ENCODE measurements at regions of chr5 and their contacts with region 1.

Region 1: DNA sequence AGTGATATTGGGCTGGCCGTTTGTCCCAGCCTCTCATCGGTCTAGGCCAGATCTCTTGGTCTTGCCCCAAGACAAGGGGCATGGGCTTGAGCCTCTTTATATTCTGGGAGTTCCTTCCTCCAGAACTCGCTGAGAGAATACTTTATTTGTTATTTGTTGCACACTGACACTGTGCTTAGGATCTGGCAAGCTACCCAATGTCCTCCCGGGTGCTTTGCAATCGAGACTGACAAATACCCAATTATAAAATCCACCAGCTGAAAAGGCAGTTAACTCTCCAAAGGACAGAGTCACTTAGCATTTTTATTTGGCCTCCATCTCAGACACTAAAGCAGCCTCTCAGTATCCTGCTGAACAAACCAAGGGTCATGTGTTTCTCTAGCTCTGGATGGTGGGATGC is 500.2 kb upstream of the DAP start:
- DNase-seq: no peak
- H3K4me3 ChIP-seq: no peak overlapping the region
- H3K27ac ChIP-seq: no peak overlapping the region
- H3K4me1 ChIP-seq: no peaks in the 10 kb centered on the region
- H3K27me3 ChIP-seq: no peaks in the 10 kb centered on the region
- CTCF ChIP-seq: no peak
- EP300 ChIP-seq: no peak
- POLR2A ChIP-seq: no peak

Region 2: DNA sequence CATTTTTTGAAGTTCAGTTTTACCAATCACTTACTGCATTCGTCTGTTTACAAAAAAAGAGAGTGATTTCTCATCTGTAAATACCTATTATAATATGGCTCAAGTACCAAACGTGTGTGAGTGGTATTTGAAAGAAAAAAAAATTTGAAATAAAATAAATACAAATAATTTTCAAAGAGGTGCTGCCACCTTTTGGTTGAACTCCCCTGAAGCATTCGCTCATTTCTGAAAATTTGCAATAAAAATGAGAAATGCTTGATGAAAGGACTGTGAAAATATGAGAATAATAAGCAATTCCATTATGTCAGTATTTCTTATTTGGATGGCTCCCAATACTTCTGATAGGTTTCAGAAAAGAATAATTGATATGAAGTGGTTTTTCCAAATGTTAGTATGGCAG is 233.1 kb after region 1 on chr5:
- intact Hi-C with region 1: loop called (anchors 10 kb)
- DNase-seq: no peak
- H3K4me3 ChIP-seq: no peak overlapping the region
- H3K27ac ChIP-seq: no peak overlapping the region
- H3K4me1 ChIP-seq: no peaks in the 10 kb centered on the region
- H3K27me3 ChIP-seq: no peaks in the 10 kb centered on the region
- CTCF ChIP-seq: peak in 3 of 7 experiments; percentile 9 to 24 (median 21)
- EP300 ChIP-seq: no peak
- POLR2A ChIP-seq: no peak

Region 3: GRCh38 chr5:11803436-11803835 is 542.2 kb after region 1 on chr5:
- intact Hi-C with region 1: no loop called
- DNase-seq: no peak
- H3K4me3 ChIP-seq: no peak overlapping the region
- H3K27ac ChIP-seq: no peak overlapping the region
- H3K4me1 ChIP-seq: no peaks in the 10 kb centered on the region
- H3K27me3 ChIP-seq: no peaks in the 10 kb centered on the region
- CTCF ChIP-seq: no peak
- EP300 ChIP-seq: no peak
- POLR2A ChIP-seq: no peak

Measured in stomach (tissue), 19 donors.